Activated CD4-positive, alpha-beta T cell treated with anti-CD3 and anti-CD28 coated beads, Interleukin-2, amount 10 ng/mL, durations not matched to agents 24 days and 14 days (primary cell): ENCODE measurements at regions of chr1 and their contacts with region 1.

Region 1: GRCh38 chr1:113031171-113031933 is 41.6 kb upstream of the LRIG2 start:
- DNase-seq: no peak
- H3K4me3 Mint-ChIP-seq: no peak overlapping the region
- H3K27ac Mint-ChIP-seq: no peak overlapping the region
- H3K4me1 Mint-ChIP-seq: peaks cover 6% of the 10 kb centered on the region
- H3K27me3 Mint-ChIP-seq: no peaks in the 10 kb centered on the region

Region 2: GRCh38 chr1:112818990-112819689 is 212.2 kb before region 1 on chr1:
- intact Hi-C with region 1: no loop called
- DNase-seq: no peak
- H3K4me3 Mint-ChIP-seq: no peak overlapping the region
- H3K27ac Mint-ChIP-seq: no peak overlapping the region
- H3K4me1 Mint-ChIP-seq: no peaks in the 10 kb centered on the region
- H3K27me3 Mint-ChIP-seq: peaks cover 9% of the 10 kb centered on the region

Region 3: DNA sequence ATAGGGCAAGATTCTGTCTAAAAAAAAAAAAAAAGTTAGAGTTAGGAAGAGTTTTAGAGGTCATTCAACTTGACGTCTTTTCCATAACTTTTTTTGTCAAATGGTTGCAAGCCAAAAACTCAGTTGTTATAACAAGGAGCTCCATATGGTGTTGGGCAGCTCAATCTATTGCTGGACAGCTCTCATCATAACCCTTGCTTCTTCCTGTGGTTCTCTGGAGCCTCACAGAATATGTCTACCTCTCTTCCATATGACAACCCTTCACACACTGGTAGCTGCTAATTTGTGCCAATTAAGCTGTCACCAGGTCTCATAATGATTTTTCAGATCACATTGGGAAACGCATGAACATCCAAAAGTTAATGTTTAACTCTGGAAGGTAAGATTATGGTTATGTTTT is 17.5 kb before region 1 on chr1:
- intact Hi-C with region 1: loop called (anchors 2 kb)
- DNase-seq: no peak
- H3K4me3 Mint-ChIP-seq: no peak overlapping the region
- H3K27ac Mint-ChIP-seq: no peak overlapping the region
- H3K4me1 Mint-ChIP-seq: no peaks in the 10 kb centered on the region
- H3K27me3 Mint-ChIP-seq: no peaks in the 10 kb centered on the region